ENCODE measurements at regions of chr2 and their contacts with region 1.

Region 1: GRCh38 chr2:42132966-42133641 is 36.0 kb upstream of the EML4 start:
- DNase-seq: peak; percentile 97
- ATAC-seq: peak; percentile 89
- H3K4me3 ChIP-seq: peak overlapping the region; percentile 38; the same call in 1 of the 2 replicates
- H3K27ac ChIP-seq: peak overlapping the region; percentile 96
- H3K4me1 ChIP-seq: peaks cover 53% of the 10 kb centered on the region
- H3K27me3 ChIP-seq: no peaks in the 10 kb centered on the region
- CTCF ChIP-seq: no peak

Region 2: DNA sequence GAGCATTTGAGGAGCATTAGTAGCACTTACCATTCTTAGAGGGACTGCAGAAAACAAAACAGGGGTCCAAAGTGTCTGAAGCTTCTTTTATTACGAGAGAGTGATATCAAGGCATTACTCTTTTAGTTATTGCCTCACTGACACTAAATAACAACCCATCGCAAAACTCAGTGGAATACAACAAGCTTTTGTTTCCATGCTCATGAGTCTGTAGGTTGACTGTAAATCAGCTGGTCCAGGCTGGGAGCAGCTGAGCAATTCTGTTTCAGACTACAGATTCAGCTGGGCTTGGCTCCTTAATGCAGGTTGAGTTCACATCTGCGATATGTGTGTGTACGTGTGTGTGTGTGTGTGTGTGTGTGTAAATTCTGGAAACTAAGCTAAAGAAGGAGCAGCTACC is 587.1 kb before region 1 on chr2:
- CTCF ChIA-PET with region 1: no interaction called
- POLR2A ChIA-PET with region 1: no interaction called
- intact Hi-C with region 1: no loop called
- DNase-seq: no peak
- ATAC-seq: no peak
- H3K4me3 ChIP-seq: no peak overlapping the region
- H3K27ac ChIP-seq: no peak overlapping the region
- H3K4me1 ChIP-seq: no peaks in the 10 kb centered on the region
- H3K27me3 ChIP-seq: peaks cover 15% of the 10 kb centered on the region
- CTCF ChIP-seq: no peak

Region 3: DNA sequence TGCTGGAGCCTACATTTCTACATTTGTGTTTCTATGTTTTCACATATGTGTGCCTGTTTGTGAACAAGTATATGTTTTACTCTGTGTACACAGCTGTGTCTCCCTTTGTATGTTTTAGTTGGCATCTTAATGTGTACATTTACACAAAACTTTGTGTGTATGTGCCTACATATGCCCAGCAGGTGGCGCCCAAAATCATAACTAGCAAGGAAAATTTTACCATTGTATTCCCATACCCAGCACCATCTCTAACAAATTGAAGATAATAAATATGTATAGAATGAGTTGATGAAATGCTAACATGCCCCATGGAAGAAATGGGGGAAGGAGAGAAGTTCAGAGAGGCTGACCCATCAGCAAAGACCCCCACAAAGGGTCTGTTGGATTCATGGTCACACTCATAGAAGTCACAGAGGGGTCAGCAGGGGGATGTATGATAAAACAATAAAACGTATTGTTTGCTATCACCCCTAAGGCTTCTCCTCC is 37.1 kb before region 1 on chr2:
- CTCF ChIA-PET with region 1: no interaction called
- POLR2A ChIA-PET with region 1: no interaction called
- intact Hi-C with region 1: loop called (anchors 2 kb)
- DNase-seq: peak; percentile 86
- ATAC-seq: peak; percentile 52
- H3K4me3 ChIP-seq: no peak overlapping the region
- H3K27ac ChIP-seq: no peak overlapping the region
- H3K4me1 ChIP-seq: peaks cover 6% of the 10 kb centered on the region; the same call in 1 of the 2 replicates
- H3K27me3 ChIP-seq: no peaks in the 10 kb centered on the region
- CTCF ChIP-seq: peak; percentile 92

Region 4: DNA sequence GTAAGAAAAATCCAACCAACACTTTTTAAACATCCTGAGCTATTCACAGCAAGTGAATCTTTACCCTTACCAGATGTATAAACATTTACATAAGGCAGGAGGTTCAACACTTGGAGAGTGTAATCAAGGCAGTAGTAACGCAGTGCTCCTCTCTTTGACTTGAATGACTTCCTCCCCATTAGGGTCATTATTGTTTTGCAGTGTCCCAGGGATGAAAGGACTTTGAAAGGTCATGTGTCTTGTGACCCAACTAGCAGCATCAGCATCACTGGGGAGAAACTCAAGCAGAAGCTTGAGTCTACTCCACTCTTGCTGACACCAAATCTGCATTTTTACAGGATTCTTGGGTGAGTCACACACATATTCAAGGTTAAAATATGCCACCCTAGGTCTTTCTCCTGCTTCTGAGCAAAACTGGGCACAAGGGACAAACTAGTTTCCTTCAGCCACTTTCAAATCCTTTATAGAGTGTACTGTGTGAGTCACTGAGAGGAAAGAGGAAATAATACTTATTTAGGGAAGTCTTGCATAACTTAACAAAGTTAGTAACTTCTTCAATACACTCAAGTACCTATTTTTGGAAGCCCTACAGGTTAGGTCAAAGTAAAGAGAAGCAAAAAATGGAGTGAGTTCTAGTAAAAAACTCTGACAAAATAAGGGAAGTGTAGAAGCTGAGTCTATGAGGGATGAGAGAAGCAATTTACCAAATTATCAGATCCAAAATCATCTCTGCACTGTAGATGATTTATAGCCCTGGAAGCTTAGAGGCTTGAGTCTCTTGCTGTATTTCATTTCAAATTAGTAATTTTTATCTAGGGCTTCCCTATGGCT is 15.0 kb before region 1 on chr2:
- CTCF ChIA-PET with region 1: no interaction called
- POLR2A ChIA-PET with region 1: no interaction called
- intact Hi-C with region 1: loop called (anchors 2 kb)
- DNase-seq: peak; percentile 95
- ATAC-seq: peak; percentile 99
- H3K4me3 ChIP-seq: no peak overlapping the region
- H3K27ac ChIP-seq: peak overlapping the region; percentile 70
- H3K4me1 ChIP-seq: peaks cover 27% of the 10 kb centered on the region
- H3K27me3 ChIP-seq: no peaks in the 10 kb centered on the region
- CTCF ChIP-seq: no peak

Region 5: GRCh38 chr2:42214669-42215068 is 81.6 kb after region 1 on chr2:
- CTCF ChIA-PET with region 1: no interaction called
- POLR2A ChIA-PET with region 1: no interaction called
- intact Hi-C with region 1: no loop called
- DNase-seq: no peak
- ATAC-seq: no peak
- H3K4me3 ChIP-seq: no peak overlapping the region
- H3K27ac ChIP-seq: no peak overlapping the region
- H3K4me1 ChIP-seq: no peaks in the 10 kb centered on the region
- H3K27me3 ChIP-seq: no peaks in the 10 kb centered on the region
- CTCF ChIP-seq: no peak

Region 6: GRCh38 chr2:42503291-42503690 is 370.2 kb after region 1 on chr2:
- CTCF ChIA-PET with region 1: no interaction called
- POLR2A ChIA-PET with region 1: interaction called, 16 read pairs
- intact Hi-C with region 1: no loop called
- DNase-seq: no peak
- ATAC-seq: no peak
- H3K4me3 ChIP-seq: no peak overlapping the region
- H3K27ac ChIP-seq: no peak overlapping the region
- H3K4me1 ChIP-seq: no peaks in the 10 kb centered on the region
- H3K27me3 ChIP-seq: no peaks in the 10 kb centered on the region
- CTCF ChIP-seq: no peak

Measured in PC-3 (cell line).